ENCODE measurements at regions of chr5 and their contacts with region 1.

Region 1: GRCh38 chr5:177403792-177404640 is 3.6 kb upstream of the PFN3 start:
- DNase-seq: peak; percentile 87 to 89
- H3K4me3 ChIP-seq: peak overlapping the region; percentile 88
- H3K4me3 Mint-ChIP-seq: peak overlapping the region; percentile 93
- H3K27ac Mint-ChIP-seq: peak overlapping the region; percentile 59
- H3K4me1 ChIP-seq: peaks cover 6% of the 10 kb centered on the region
- H3K4me1 Mint-ChIP-seq: peaks cover 6% of the 10 kb centered on the region
- H3K27me3 ChIP-seq: no peaks in the 10 kb centered on the region
- H3K27me3 Mint-ChIP-seq: no peaks in the 10 kb centered on the region
- CTCF ChIP-seq: peak; percentile 65 to 86

Region 2: DNA sequence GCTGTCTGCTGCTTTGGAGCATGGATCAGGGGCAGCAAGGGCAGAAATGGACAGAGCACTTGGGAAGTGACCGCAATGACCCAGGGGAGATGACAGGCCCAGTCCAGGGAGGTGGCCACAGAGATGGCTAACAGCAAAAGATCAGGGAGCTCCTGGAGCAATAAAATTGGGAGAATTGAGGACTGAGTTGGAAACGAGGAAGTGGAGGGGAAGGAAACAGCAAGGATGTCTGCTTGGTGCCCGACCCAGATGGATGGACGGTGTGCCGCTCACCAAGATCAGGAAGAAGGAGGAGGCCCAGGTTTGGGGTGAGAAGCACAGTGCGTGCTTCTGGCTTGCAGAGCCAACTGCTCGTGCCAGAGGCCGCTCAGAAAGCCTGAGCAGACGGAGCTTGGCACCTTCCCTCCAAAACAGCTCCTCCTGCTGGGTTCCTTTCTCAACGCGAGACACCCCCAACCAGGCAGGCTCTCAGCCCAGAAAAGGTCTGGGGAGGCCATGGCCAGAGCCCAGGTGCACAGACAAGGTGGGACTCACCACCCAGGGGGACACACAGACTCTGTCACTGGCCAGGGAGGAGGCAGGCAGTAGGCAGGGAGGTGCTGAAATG is 21.5 kb before region 1 on chr5:
- CTCF ChIA-PET with region 1: interaction called, 148 read pairs
- POLR2A ChIA-PET with region 1: interaction called, 17 read pairs
- intact Hi-C with region 1: no loop called
- DNase-seq: peak in 1 of 2 experiments; percentile 53
- H3K4me3 ChIP-seq: no peak overlapping the region
- H3K4me3 Mint-ChIP-seq: no peak overlapping the region
- H3K27ac Mint-ChIP-seq: peak overlapping the region; percentile 36
- H3K4me1 ChIP-seq: peaks cover 30% of the 10 kb centered on the region
- H3K4me1 Mint-ChIP-seq: peaks cover 30% of the 10 kb centered on the region
- H3K27me3 ChIP-seq: no peaks in the 10 kb centered on the region
- H3K27me3 Mint-ChIP-seq: no peaks in the 10 kb centered on the region
- CTCF ChIP-seq: peak in 1 of 2 experiments; percentile 36

Region 3: DNA sequence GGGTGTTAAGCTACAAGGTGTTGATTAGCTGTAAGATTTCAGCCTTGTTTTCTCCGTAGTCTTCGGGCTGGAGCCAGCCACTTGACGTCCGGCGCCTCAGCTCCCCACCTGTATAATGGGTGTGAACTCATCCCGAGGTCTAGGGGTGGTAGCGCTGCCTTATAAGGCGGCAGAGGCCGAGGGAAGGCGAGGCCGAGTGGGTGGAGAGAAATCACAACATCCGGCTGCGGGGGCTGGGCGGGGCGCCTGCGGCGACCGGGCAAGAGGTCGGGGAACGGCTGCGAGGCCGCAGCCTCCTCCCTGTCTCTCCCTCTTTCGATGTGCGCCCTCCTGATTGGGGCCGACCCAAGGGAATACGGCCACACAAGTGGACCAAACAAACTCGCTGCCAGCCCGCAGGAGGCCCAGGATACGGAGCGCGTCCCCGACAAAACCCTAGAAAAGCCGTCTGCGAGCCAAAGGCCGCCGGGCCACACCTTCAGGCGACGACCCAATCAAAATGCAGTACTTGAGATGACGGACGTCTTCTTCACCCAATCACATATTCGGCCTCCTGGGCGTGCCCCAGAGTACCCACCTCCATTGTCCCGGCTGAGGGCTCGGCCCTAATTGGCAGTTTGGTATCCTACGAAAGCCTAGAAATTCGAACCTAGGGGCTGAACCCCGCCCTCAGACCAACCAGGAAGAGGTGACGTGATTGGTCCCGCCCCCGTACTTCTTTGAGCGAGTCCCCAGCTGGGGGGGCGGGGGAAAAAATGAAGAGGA is 22.0 kb after region 1 on chr5:
- CTCF ChIA-PET with region 1: interaction called, 47 read pairs
- POLR2A ChIA-PET with region 1: interaction called, 32 read pairs
- intact Hi-C with region 1: loop called (anchors 1 kb)
- DNase-seq: peak; percentile 100
- H3K4me3 ChIP-seq: peak overlapping the region; percentile 59
- H3K4me3 Mint-ChIP-seq: peak overlapping the region; percentile 92
- H3K27ac Mint-ChIP-seq: peak overlapping the region; percentile 99
- H3K4me1 ChIP-seq: peaks cover 15% of the 10 kb centered on the region
- H3K4me1 Mint-ChIP-seq: peaks cover 12% of the 10 kb centered on the region
- H3K27me3 ChIP-seq: no peaks in the 10 kb centered on the region
- H3K27me3 Mint-ChIP-seq: no peaks in the 10 kb centered on the region
- CTCF ChIP-seq: no peak

Region 4: GRCh38 chr5:177454397-177455035 is 50.5 kb after region 1 on chr5:
- CTCF ChIA-PET with region 1: interaction called, 110 read pairs
- POLR2A ChIA-PET with region 1: interaction called, 9 read pairs
- intact Hi-C with region 1: loop called (anchors 1 kb)
- DNase-seq: peak; percentile 90 to 97
- H3K4me3 ChIP-seq: peak overlapping the region; percentile 92
- H3K4me3 Mint-ChIP-seq: peak overlapping the region; percentile 77
- H3K27ac Mint-ChIP-seq: peak overlapping the region; percentile 87
- H3K4me1 ChIP-seq: peaks cover 7% of the 10 kb centered on the region; the same call in 1 of the 2 replicates
- H3K4me1 Mint-ChIP-seq: peaks cover 7% of the 10 kb centered on the region
- H3K27me3 ChIP-seq: no peaks in the 10 kb centered on the region
- H3K27me3 Mint-ChIP-seq: no peaks in the 10 kb centered on the region
- CTCF ChIP-seq: peak; percentile 62 to 95

Measured in Caco-2 (cell line).